Lower leg skin (tissue), 4 donors: ENCODE measurements at regions of chr9 and their contacts with region 1.

Region 1: DNA sequence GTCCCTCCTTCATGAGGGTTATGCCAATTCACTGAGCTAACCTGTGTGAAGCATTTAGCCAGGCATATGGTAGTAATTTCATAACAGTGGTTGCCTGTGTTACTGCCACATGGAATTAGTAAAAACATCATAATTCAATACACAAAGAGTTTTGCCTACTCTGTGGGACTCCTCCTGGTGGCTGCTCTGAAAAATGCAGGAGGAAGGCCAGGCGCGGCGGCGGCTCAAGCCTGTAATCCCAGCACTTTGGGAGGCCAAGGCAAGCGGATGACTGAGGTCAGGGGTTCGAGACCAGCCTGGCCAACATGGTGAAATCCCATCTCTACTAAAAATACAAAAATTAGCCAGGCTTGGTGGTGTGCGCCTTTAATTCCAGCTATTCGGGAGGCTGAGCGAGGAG is 547.3 kb downstream of the CDK5RAP2 start:
- DNase-seq: no peak
- H3K4me3 ChIP-seq: no peak overlapping the region
- CTCF ChIP-seq: no peak
- POLR2A ChIP-seq: no peak

Region 2: GRCh38 chr9:118503236-118503635 is 1529.4 kb before region 1 on chr9:
- intact Hi-C with region 1: loop called (anchors 5 kb)
- DNase-seq: no peak
- H3K4me3 ChIP-seq: no peak overlapping the region
- CTCF ChIP-seq: no peak
- POLR2A ChIP-seq: no peak